Dendritic cell treated with granulocyte-macrophage colony-stimulating factor and Interleukin-4, amounts not matched to agents 40 ng/mL and 50 ng/mL, for 4 days (primary cell): ENCODE measurements at regions of chr9 and their contacts with region 1.

Region 1: DNA sequence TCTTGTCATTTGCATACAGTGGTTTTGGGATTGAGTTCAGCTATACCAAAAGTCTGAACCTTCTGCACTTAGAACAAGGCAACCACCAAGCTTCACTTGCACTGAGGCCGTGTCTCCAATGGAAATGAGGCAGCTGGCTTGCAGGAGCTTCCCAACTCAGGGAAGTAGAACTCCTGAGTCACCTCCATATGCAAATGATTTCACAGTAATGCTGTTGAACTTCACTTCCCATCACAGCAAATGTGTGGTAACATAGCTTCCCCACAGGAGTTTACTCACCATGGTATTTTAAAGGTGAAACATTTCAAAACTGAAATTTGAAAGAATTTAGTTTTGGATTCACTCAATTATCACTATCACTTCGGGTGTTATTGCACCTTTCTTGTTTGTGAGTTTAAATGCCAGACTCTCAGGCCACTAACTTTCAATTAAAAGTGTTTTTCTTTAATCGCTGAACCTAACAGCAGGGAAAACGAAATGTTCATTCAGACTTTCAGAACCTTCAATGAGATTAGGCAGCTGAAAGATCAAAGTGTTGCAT is 9.0 kb downstream of the CD274 start:
- H3K4me3 Mint-ChIP-seq: peak overlapping the region; percentile 48
- H3K27ac Mint-ChIP-seq: peak overlapping the region; percentile 80
- H3K4me1 Mint-ChIP-seq: peaks cover 62% of the 10 kb centered on the region
- H3K27me3 Mint-ChIP-seq: no peaks in the 10 kb centered on the region

Region 2: DNA sequence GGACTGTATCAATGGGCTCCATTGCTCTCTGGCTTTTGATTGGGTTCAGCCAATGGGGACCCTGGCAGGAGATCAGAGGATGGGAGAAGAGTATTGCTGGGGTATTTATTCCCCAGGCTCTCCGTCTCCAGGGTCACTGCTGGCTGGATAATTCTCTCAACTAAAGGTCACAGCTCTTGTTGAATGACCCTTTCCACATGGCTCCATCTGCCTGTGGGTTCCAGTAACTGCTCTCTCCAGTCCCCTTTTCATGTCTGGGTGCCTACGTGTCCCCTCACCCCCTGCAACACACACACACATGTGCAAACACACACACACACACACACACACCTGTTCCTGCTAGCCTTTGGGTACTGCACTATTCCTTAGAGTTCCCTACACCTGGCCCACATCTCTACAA is 115.6 kb after region 1 on chr9:
- intact Hi-C with region 1: loop called (anchors 5 kb)
- H3K4me3 Mint-ChIP-seq: no peak overlapping the region
- H3K27ac Mint-ChIP-seq: peak overlapping the region; percentile 45
- H3K4me1 Mint-ChIP-seq: peaks cover 19% of the 10 kb centered on the region
- H3K27me3 Mint-ChIP-seq: no peaks in the 10 kb centered on the region